T-cell (primary cell): ENCODE measurements at regions of chr1 and their contacts with region 1.

Region 1: DNA sequence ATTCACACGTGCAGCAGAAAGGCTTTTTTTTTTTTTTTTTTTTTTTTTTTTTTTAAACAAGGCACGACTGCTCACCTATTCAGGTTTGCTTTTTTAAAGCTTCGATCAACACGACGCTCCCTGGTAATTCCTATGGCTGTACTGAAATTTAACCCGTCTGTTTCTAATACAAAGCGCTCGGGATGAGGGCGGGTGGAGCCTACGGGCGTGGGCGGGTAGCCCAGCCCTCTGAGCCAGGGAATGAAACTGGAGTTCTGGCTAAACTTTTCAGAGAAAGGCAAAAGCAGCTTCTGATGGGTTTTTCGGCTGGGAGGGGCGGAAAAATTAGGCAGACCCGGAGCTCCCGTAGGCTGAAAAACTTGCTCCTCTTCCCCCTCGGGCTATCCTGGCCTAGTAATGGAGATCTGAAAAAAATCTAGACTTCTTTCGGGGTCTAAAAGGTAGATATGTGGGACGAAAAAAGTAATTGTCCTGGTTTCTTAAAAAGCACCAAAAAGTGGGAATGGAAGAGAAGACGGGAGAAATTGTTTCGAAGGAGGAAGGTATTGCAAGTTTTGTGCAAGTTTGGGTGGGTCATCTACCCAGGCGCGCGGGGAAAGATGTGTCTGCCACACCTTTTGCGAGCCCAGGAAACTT is 7.4 kb downstream of the NR5A2 start:
- DNase-seq: no peak
- ATAC-seq: no peak
- H3K4me3 ChIP-seq: peak overlapping the region in 1 of 2 donors; percentile 55
- H3K4me3 Mint-ChIP-seq: no peak overlapping the region
- H3K27ac ChIP-seq: no peak overlapping the region
- H3K27ac Mint-ChIP-seq: no peak overlapping the region
- H3K4me1 ChIP-seq: peaks cover 6 to 25% of the 10 kb centered on the region in 2 experiments
- H3K4me1 Mint-ChIP-seq: peaks cover 10 to 34% (median 16%) of the 10 kb centered on the region in 3 donors
- H3K27me3 ChIP-seq: peaks cover 31 to 68% of the 10 kb centered on the region in 2 experiments
- H3K27me3 Mint-ChIP-seq: peaks cover 28 to 48% of the 10 kb centered on the region in 2 donors

Region 2: DNA sequence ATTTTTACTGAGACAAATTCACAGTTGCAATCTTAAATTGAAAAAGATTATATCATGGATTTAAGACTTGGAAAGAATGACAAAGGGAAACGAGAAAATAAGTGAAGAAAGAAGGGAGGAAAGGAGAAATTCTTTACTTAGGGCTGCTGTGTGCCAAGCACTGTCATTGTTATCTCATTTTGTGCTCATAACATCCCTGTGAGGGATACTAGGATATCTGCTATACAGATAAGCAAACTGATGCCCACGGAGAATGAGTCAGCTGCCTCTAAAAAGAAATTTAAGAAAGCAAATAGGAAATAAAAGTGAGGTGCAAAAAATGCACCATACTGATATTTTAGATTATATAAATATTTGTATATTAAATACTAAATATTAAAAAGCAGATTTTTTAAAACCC is 191.0 kb before region 1 on chr1:
- CTCF ChIA-PET with region 1: no interaction called
- POLR2A ChIA-PET with region 1: interaction called in 1 of 2 experiments, 10 read pairs
- DNase-seq: no peak
- ATAC-seq: no peak
- H3K4me3 ChIP-seq: no peak overlapping the region
- H3K4me3 Mint-ChIP-seq: no peak overlapping the region
- H3K27ac ChIP-seq: no peak overlapping the region
- H3K27ac Mint-ChIP-seq: no peak overlapping the region
- H3K4me1 ChIP-seq: no peaks in the 10 kb centered on the region
- H3K4me1 Mint-ChIP-seq: no peaks in the 10 kb centered on the region
- H3K27me3 ChIP-seq: no peaks in the 10 kb centered on the region
- H3K27me3 Mint-ChIP-seq: peaks cover 8 to 14% of the 10 kb centered on the region in 2 donors

Region 3: DNA sequence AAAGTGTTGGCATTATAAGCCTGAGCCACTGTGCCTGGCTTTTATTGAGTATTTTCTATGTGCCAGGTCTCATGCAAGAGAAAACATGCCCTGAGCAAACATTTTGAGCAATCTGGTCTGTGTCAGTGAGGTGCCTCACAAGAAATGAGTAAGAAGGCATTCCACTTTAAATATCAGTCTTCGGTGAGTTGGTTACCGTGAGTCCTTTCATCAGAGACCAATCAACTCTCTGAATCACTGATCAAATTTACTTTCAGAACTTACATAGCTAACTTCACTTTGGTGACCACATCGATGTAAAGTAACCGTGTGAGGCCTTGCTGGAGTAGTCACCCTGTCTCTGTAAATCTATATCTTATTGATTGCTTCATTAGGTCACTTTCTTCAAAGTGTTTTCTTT is 649.1 kb after region 1 on chr1:
- CTCF ChIA-PET with region 1: no interaction called
- POLR2A ChIA-PET with region 1: interaction called in 1 of 2 experiments, 23 read pairs
- DNase-seq: no peak
- ATAC-seq: no peak
- H3K4me3 ChIP-seq: no peak overlapping the region
- H3K4me3 Mint-ChIP-seq: no peak overlapping the region
- H3K27ac ChIP-seq: no peak overlapping the region
- H3K27ac Mint-ChIP-seq: no peak overlapping the region
- H3K4me1 ChIP-seq: no peaks in the 10 kb centered on the region
- H3K4me1 Mint-ChIP-seq: no peaks in the 10 kb centered on the region
- H3K27me3 ChIP-seq: peaks cover 0 to 3% of the 10 kb centered on the region in 2 experiments
- H3K27me3 Mint-ChIP-seq: peaks cover 3 to 15% of the 10 kb centered on the region in 2 donors